Endothelial cell of umbilical vein (primary cell): ENCODE measurements at regions of chr3 and their contacts with region 1.

Region 1: DNA sequence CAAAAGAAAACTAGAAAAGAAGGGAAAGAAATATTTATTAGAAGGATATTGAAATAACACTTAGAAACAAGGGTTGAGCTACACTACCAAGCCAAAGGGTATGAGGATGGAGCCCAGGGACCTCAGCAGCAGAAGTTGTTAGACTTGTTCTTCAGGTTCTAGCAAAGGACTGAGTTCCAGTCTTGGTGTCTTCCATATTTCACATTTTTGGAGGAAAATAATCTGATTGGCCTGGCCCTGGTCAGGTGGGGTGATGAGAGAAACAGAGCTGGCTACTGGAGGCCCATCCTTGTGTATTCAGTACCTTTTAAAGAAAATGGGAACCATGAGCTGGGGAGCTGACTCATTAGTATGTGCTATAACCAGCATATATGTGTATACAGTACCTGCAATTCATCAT is 28.2 kb downstream of the PPP4R2 start:
- DNase-seq: no peak
- H3K4me3 ChIP-seq: no peak overlapping the region
- H3K27ac ChIP-seq: no peak overlapping the region
- H3K4me1 ChIP-seq: peaks cover 19% of the 10 kb centered on the region
- H3K27me3 ChIP-seq: no peaks in the 10 kb centered on the region
- CTCF ChIP-seq: no peak
- POLR2A ChIP-seq: no peak

Region 2: DNA sequence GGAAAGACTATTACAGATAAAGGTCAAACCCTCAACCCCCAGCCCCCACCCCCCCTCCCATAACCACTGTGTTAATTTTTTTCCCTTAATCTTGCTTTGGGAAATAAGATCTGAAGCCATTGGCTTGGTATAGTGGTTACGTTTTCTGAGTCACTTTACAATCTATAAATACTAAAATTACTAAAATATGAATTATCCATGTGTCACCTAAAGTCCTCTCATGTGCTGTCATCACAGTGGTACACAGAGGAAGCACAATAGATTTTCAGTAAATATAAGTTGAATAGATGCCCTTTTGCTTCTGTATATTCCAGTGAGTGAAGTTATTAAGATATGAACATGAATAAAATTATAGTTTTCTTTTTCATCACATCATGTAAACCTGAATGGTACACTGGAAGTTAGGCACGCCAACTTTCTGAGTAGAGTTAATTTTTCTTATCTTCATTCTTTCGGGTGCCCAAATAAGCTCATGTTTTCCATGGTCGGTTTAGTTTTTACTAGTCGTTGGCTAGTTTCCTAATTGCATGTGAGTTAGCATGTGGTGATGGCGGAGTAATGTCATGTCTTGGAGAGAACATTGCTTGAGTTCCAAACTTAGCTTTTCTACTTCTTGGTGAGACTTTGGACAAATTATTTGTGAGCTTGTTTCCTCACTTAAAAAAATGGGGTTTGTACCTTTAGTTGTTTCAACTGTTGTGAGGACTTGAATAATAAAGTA is 16.7 kb before region 1 on chr3:
- CTCF ChIA-PET with region 1: no interaction called
- POLR2A ChIA-PET with region 1: interaction called, 3 read pairs
- dilution Hi-C with region 1: no loop called
- intact Hi-C with region 1: loop called (anchors 2 kb)
- DNase-seq: no peak
- H3K4me3 ChIP-seq: no peak overlapping the region
- H3K27ac ChIP-seq: no peak overlapping the region
- H3K4me1 ChIP-seq: no peaks in the 10 kb centered on the region
- H3K27me3 ChIP-seq: no peaks in the 10 kb centered on the region
- CTCF ChIP-seq: no peak
- POLR2A ChIP-seq: no peak